ENCODE measurements at regions of chr18 and their contacts with region 1.

Region 1: GRCh38 chr18:74353169-74353775 is 37.6 kb downstream of the C18orf63 start:
- DNase-seq: peak; percentile 52 to 54
- H3K4me3 ChIP-seq: no peak overlapping the region
- H3K27ac ChIP-seq: no peak overlapping the region
- H3K4me1 ChIP-seq: no peaks in the 10 kb centered on the region
- H3K27me3 ChIP-seq: no peaks in the 10 kb centered on the region
- CTCF ChIP-seq: peak; percentile 59 to 77 (median 70)
- POLR2A ChIP-seq: no peak

Region 2: DNA sequence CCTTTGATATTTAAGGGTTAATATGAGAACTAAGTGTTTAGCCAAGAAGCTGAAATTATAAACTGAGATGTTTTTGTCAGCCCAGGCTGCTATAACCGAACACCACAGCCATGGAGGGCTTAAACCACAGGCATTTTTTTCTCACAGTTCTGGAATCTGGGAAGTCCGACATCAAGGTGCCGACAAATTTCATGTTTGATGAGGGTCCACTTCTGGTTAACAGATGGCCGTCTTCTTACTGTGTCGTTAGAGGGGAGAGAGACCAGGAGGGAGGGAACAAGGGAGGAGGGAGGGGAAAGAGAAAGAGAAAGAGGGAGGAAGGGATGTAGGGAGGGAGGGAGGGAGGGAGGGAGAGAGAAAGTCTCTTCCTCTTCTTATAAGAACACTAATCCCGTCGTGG is 136.4 kb after region 1 on chr18:
- intact Hi-C with region 1: loop called (anchors 10 kb)
- DNase-seq: no peak
- H3K4me3 ChIP-seq: no peak overlapping the region
- H3K27ac ChIP-seq: no peak overlapping the region
- H3K4me1 ChIP-seq: no peaks in the 10 kb centered on the region
- H3K27me3 ChIP-seq: no peaks in the 10 kb centered on the region
- CTCF ChIP-seq: no peak
- POLR2A ChIP-seq: no peak

Measured in uterus (tissue), 4 donors.